CD8-positive, alpha-beta T cell (primary cell): ENCODE measurements at regions of chr3 and their contacts with region 1.

Region 1: DNA sequence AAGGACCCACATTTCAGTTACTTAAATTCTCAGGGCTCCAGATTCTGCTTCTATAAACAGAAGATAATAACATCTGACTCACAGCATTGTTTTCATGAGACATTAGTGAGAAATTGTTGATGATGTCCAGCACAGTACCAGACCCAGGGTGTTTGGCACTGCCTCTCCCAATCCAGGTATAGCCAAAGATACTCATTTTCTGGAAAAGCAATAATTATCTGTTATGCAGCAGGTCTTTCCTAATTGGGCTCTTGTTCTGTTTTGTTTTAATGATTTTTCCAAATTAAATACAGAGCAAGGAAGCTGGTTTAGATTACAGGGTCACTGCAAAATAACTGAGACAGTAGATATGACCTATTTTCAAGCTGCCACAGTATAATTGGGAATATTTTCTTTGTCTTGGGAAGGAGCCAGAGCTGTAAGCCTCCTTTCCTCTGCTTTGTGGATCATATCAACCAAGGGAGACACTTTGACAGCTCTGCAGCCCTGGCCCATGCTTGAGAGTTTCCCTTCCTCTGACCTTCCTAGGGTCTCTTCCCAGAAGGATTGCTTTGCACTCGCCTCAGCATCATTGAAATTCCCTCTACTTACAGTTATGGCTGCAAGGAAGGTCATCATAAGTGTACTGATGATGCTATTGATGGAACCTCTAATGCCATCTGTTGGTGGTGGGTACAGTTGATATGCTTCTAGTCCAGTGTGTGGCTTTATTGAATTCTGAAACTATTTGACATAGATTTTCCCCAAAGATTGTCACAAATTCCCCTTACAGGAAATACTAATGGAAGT is 522.4 kb upstream of the ADAMTS9 start:
- DNase-seq: no peak
- ATAC-seq: no peak
- H3K4me3 ChIP-seq: no peak overlapping the region
- H3K4me3 Mint-ChIP-seq: no peak overlapping the region
- H3K27ac ChIP-seq: no peak overlapping the region
- H3K27ac Mint-ChIP-seq: no peak overlapping the region
- H3K4me1 ChIP-seq: no peaks in the 10 kb centered on the region
- H3K4me1 Mint-ChIP-seq: no peaks in the 10 kb centered on the region
- H3K27me3 ChIP-seq: no peaks in the 10 kb centered on the region
- H3K27me3 Mint-ChIP-seq: no peaks in the 10 kb centered on the region
- CTCF ChIP-seq: no peak

Region 2: DNA sequence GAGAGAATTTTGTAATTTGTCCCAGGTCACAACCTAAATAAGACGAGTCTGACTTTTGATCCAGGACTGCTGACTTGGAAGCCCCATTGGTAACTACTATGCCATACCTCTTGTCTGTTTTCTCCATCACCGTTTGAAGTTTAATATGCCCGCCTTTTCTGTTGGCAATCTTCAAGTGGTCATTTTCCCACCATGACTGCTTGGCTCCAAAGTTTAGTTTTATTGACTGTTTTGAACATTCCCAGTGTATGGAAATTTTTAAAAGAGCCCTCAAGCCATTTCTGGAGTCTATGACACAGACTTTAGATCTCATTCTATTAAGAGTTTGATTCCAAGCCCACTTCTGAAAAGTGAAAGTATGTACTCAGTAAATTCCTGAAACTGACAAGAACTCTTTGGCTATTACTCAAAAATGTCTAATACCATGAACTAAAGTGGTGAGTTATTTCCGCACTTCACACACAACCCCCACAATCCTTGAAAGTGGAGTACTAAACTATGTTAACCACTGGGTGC is 385.8 kb before region 1 on chr3:
- CTCF ChIA-PET with region 1: no interaction called
- POLR2A ChIA-PET with region 1: no interaction called
- intact Hi-C with region 1: loop called in 1 of 2 experiments (anchors 10 kb)
- DNase-seq: no peak
- ATAC-seq: no peak
- H3K4me3 ChIP-seq: no peak overlapping the region
- H3K4me3 Mint-ChIP-seq: no peak overlapping the region
- H3K27ac ChIP-seq: no peak overlapping the region
- H3K27ac Mint-ChIP-seq: no peak overlapping the region
- H3K4me1 ChIP-seq: no peaks in the 10 kb centered on the region
- H3K4me1 Mint-ChIP-seq: no peaks in the 10 kb centered on the region
- H3K27me3 ChIP-seq: no peaks in the 10 kb centered on the region
- H3K27me3 Mint-ChIP-seq: no peaks in the 10 kb centered on the region
- CTCF ChIP-seq: no peak